HCT116 (cell line): ENCODE measurements at regions of chr4 and their contacts with region 1.

Region 1: GRCh38 chr4:85747882-85748491 is 273.0 kb downstream of the ARHGAP24 start:
- DNase-seq: peak; percentile 73
- ATAC-seq: peak; percentile 74
- H3K4me3 ChIP-seq: no peak overlapping the region
- H3K27ac ChIP-seq: no peak overlapping the region
- H3K4me1 ChIP-seq: peaks cover 17 to 28% of the 10 kb centered on the region in 2 experiments
- H3K27me3 ChIP-seq: no peaks in the 10 kb centered on the region
- CTCF ChIP-seq: peak; percentile 67 to 90 (median 76)
- POLR2A ChIP-seq: no peak
- RAD21 ChIP-seq: peak; percentile 88

Region 2: GRCh38 chr4:85084380-85085094 is 663.5 kb before region 1 on chr4:
- CTCF ChIA-PET with region 1: interaction called, 13 read pairs
- POLR2A ChIA-PET with region 1: no interaction called
- RAD21 ChIA-PET with region 1: interaction called in 1 of 2 experiments, 3 read pairs
- intact Hi-C with region 1: loop called (anchors 2 kb)
- DNase-seq: peak; percentile 75
- ATAC-seq: peak; percentile 79
- H3K4me3 ChIP-seq: no peak overlapping the region
- H3K27ac ChIP-seq: no peak overlapping the region
- H3K4me1 ChIP-seq: no peaks in the 10 kb centered on the region
- H3K27me3 ChIP-seq: no peaks in the 10 kb centered on the region
- CTCF ChIP-seq: peak; percentile 49 to 71 (median 70); a peak in 5 of 6 replicates
- POLR2A ChIP-seq: no peak
- RAD21 ChIP-seq: peak; percentile 75

Region 3: DNA sequence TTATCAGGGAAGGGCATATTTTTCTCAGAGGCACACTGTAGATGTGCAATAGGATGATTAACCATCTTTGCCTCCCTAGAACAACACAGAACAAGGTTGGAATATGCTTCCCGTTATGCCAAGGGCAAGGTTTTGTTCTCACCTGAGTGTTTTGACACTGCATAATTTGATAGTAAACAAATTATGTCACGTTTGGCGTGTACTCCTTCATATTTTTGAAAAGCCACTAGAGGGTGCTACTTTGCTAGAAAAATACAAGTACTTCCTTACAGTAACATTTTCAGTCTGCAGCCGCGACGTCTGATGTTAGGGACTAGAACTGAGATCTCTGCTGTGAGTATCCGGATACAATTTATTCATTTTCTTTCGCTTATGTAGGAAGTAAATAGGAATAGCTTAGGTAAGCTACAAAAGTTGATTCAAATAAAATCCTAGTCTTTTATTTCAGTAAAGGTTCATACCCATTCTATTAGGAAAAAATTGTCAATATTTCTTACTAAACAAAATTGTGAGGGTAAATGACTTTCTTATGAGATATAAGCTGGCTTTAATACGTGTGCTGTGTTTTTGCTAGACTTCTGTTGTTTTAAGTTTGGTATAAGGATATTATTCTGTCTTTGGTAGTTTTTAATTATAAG is 600.4 kb before region 1 on chr4:
- CTCF ChIA-PET with region 1: interaction called, 13 read pairs
- POLR2A ChIA-PET with region 1: no interaction called
- RAD21 ChIA-PET with region 1: no interaction called
- intact Hi-C with region 1: loop called (anchors 1 kb)
- DNase-seq: peak; percentile 69
- ATAC-seq: peak; percentile 93
- H3K4me3 ChIP-seq: no peak overlapping the region; a peak in 1 of 4 replicates
- H3K27ac ChIP-seq: no peak overlapping the region
- H3K4me1 ChIP-seq: no peaks in the 10 kb centered on the region; a peak in 1 of 4 replicates
- H3K27me3 ChIP-seq: no peaks in the 10 kb centered on the region
- CTCF ChIP-seq: peak; percentile 43 to 68 (median 67); a peak in 4 of 6 replicates
- POLR2A ChIP-seq: no peak
- RAD21 ChIP-seq: peak; percentile 83

Region 4: DNA sequence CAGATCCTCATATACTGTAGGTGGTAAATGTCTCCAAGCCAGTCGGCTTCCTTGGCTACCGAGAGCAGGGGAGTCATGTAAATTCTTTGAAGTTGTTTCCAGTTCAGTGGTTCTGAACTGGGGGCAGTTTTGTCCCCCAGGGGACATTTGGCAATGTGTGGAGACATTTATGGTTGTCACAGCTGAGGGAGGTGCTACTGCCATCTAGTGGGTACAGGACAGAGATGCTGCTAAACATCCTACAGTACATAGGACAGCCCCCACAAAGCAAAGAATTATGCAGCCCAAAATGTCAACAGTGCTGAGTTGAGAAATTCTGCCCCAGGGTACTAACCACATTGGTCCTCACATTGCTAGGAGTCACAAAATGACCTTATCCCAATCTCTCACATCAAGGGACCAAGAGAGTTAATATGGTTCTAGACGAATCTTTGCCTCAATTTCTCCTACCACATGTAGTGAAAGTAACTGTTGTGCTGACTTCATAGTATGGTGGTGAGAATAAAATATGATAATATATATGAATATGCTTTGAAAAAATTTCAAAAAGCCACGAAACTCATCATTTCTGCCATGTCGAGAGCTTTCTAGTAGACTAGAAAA is 377.5 kb before region 1 on chr4:
- CTCF ChIA-PET with region 1: no interaction called
- POLR2A ChIA-PET with region 1: no interaction called
- RAD21 ChIA-PET with region 1: no interaction called
- intact Hi-C with region 1: loop called (anchors 5 kb)
- DNase-seq: peak; percentile 21
- ATAC-seq: peak; percentile 97
- H3K4me3 ChIP-seq: no peak overlapping the region
- H3K27ac ChIP-seq: no peak overlapping the region
- H3K4me1 ChIP-seq: no peaks in the 10 kb centered on the region
- H3K27me3 ChIP-seq: no peaks in the 10 kb centered on the region
- CTCF ChIP-seq: peak; percentile 62 to 89 (median 85)
- POLR2A ChIP-seq: no peak
- RAD21 ChIP-seq: peak; percentile 73

Region 5: GRCh38 chr4:85419103-85419502 is 328.9 kb before region 1 on chr4:
- CTCF ChIA-PET with region 1: interaction called, 7 read pairs
- POLR2A ChIA-PET with region 1: no interaction called
- RAD21 ChIA-PET with region 1: no interaction called
- intact Hi-C with region 1: loop called (anchors 5 kb)
- DNase-seq: no peak
- ATAC-seq: no peak
- H3K4me3 ChIP-seq: no peak overlapping the region
- H3K27ac ChIP-seq: no peak overlapping the region
- H3K4me1 ChIP-seq: peaks cover 0 to 9% of the 10 kb centered on the region in 2 experiments; a peak in 1 of 4 replicates
- H3K27me3 ChIP-seq: no peaks in the 10 kb centered on the region
- CTCF ChIP-seq: no peak
- POLR2A ChIP-seq: no peak
- RAD21 ChIP-seq: no peak

Region 6: DNA sequence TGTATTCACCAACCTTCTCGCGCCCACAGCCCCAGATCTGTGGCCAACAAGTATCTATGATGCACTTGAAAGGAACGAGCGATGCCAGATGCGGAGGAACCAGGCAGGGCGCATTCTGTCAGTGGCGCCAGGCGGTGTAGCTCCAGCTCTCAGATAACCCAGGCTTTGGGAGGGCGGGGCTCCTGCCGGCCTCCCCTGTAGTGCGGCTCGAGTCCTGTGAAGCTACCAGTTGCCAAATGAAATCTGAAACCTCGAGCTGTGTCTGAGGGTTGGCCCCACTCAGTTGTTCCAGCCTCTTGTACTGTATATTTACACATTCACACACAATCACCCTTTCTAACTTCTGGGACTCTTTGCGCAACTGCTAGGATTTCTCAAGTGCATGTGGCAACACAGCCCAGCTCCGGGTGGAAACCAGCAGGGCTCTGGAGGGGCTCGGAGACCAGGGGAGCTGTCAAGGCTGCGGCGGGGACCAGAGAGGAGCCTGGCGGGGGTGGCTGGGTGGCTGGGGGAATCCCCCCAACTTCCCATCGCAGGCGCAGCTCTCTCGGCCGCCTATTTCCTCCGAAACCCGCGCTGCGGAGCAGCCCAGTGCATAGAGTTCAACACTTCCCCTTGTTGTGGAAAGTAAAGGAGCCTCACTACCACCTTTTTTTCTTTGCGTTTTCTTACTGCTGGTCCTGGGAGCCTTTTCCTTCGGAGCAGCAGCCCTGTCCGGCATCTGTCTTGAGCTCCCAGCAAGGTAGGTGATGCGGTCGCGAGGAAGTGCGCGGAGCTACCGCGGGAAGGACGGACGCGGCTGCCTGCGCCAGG is 273.0 kb before region 1 on chr4 and contains the start of gene ARHGAP24:
- CTCF ChIA-PET with region 1: no interaction called
- POLR2A ChIA-PET with region 1: interaction called, 7 read pairs
- RAD21 ChIA-PET with region 1: no interaction called
- intact Hi-C with region 1: loop called (anchors 10 kb)
- DNase-seq: peak; percentile 70
- ATAC-seq: peak; percentile 95
- H3K4me3 ChIP-seq: peak within 1 kb of the TSS; percentile 59 to 85
- H3K27ac ChIP-seq: peak within 1 kb of the TSS; percentile 32; the same call in 1 of the 2 replicates
- H3K4me1 ChIP-seq: peaks cover 2 to 6% of the 10 kb centered on the region in 2 experiments; a peak in 3 of 4 replicates
- H3K27me3 ChIP-seq: no peaks in the 10 kb centered on the region
- CTCF ChIP-seq: no peak
- POLR2A ChIP-seq: no peak
- RAD21 ChIP-seq: no peak
- total RNA-seq, gene ARHGAP24: 1.3 TPM

Region 7: DNA sequence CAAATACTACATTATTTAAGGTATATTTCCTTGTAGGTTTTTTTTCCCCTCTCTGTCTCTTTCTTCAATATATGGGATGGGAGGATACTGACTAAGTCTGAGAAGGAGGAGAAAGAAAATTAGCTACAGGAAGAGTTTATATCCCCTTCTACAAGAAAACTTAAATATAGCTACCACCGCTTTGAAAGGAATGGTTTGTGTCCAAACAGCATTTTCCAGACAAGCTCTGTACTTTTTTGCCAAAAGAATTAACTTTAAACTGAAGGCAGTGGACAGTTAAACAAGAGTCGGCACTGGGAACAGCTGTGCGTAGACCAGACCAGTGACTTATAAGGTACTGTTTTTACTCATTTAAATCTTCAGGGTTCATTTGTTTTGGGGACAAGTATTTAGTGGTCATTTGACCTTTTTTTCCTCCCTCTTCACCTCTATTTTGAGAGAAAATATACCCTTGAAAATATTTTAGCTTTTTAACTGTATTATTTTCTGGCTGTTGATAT is 30.7 kb after region 1 on chr4:
- CTCF ChIA-PET with region 1: no interaction called
- POLR2A ChIA-PET with region 1: no interaction called
- RAD21 ChIA-PET with region 1: no interaction called
- intact Hi-C with region 1: no loop called
- DNase-seq: no peak
- ATAC-seq: no peak
- H3K4me3 ChIP-seq: no peak overlapping the region
- H3K27ac ChIP-seq: no peak overlapping the region
- H3K4me1 ChIP-seq: peaks cover 0 to 10% of the 10 kb centered on the region in 2 experiments; a peak in 1 of 4 replicates
- H3K27me3 ChIP-seq: no peaks in the 10 kb centered on the region
- CTCF ChIP-seq: no peak
- POLR2A ChIP-seq: no peak
- RAD21 ChIP-seq: no peak